ENCODE measurements at regions of chr10 and their contacts with region 1.

Region 1: DNA sequence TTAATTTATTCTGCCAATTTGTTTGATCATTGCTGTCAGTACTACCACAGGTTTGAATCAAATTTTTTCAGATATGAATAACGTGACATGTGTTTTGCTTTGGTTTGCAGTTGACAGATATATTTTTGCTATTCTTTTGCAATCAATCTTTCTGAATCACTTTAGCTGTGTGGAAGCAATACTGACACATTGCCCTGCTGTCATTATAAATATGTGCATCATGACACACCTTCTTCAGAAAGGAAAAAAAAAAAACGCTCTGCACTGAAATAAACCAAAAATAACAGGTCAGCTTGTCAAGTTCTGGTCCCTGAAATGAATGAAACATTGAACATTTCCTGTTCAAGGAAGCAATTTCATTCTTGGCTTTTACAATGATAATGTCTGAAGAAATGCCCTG is 93.8 kb upstream of the FAM13C start:
- DNase-seq: no peak
- ATAC-seq: no peak

Region 2: GRCh38 chr10:59273445-59273844 is 182.8 kb before region 1 on chr10:
- intact Hi-C with region 1: loop called in 1 of 2 experiments (anchors 10 kb)
- DNase-seq: no peak
- ATAC-seq: peak in 1 of 2 donors; percentile 47

Measured in left cardiac atrium (tissue), 4 donors.